ENCODE measurements at regions of chr15 and their contacts with region 1.

Region 1: GRCh38 chr15:40941528-40942336 is 11.5 kb upstream of the CHAC1 start:
- DNase-seq: peak; percentile 68 to 97 (median 84)
- ATAC-seq: peak; percentile 91
- H3K4me3 ChIP-seq: peak overlapping the region; percentile 40 to 57
- H3K27ac ChIP-seq: peak overlapping the region; percentile 89 to 93
- H3K4me1 ChIP-seq: peaks cover 16 to 48% of the 10 kb centered on the region in 2 donors
- H3K27me3 ChIP-seq: no peaks in the 10 kb centered on the region
- CTCF ChIP-seq: peak; percentile 36 to 75

Region 2: GRCh38 chr15:41013698-41014414 is 72.1 kb after region 1 on chr15:
- intact Hi-C with region 1: loop called in 1 of 2 experiments (anchors 5 kb)
- DNase-seq: peak in 1 of 4 donors; percentile 78
- ATAC-seq: peak; percentile 9
- H3K4me3 ChIP-seq: no peak overlapping the region
- H3K27ac ChIP-seq: peak overlapping the region in 1 of 2 donors; percentile 40
- H3K4me1 ChIP-seq: peaks cover 28 to 70% of the 10 kb centered on the region in 2 donors
- H3K27me3 ChIP-seq: no peaks in the 10 kb centered on the region
- CTCF ChIP-seq: no peak

Measured in left lung (tissue), 14 donors.